AG04450 (cell line): ENCODE measurements at regions of chr1 and their contacts with region 1.

Region 1: DNA sequence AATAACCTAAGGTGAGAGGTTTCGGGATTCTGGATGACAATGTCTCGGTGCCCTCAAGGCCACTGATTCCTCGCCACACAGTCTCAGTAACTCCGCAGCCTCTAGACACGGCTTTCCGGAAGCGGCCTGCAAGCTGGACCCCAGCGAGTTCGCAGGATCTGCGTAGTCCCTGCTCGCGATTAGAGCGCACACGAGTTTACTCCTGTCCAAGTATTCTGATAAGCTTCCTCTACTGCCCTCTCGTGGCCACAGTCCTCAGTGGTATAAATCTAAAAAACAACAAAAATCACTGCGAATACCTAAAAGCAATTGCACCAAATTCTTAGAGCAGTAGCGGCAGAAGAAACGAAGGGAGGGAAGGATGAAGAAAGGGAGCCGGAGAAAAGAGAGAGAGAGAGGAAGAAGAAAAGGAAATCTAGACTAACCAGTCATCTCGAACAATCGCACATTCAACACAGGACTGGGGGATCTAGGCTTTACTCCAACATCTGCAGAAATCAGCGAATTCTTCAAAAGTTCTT is 1.1 kb upstream of the PLXNA2 start:
- DNase-seq: peak; percentile 78
- H3K4me3 ChIP-seq: 0 out of 2 replicates have a peak overlapping the region, but pooled peaks have one; percentile 20
- H3K27ac ChIP-seq: peak overlapping the region; percentile 21
- H3K27me3 ChIP-seq: peaks cover 30% of the 10 kb centered on the region
- CTCF ChIP-seq: peak; percentile 77

Region 2: GRCh38 chr1:207997486-207998268 is 247.6 kb before region 1 on chr1:
- CTCF ChIA-PET with region 1: interaction called, 18 read pairs
- POLR2A ChIA-PET with region 1: no interaction called
- DNase-seq: peak; percentile 27
- H3K4me3 ChIP-seq: no peak overlapping the region
- H3K27ac ChIP-seq: no peak overlapping the region
- H3K27me3 ChIP-seq: peaks cover 10% of the 10 kb centered on the region
- CTCF ChIP-seq: peak; percentile 83

Region 3: GRCh38 chr1:208029381-208030287 is 215.6 kb before region 1 on chr1:
- CTCF ChIA-PET with region 1: interaction called, 593 read pairs
- POLR2A ChIA-PET with region 1: no interaction called
- DNase-seq: peak; percentile 33
- H3K4me3 ChIP-seq: no peak overlapping the region; the same call in 1 of the 2 replicates
- H3K27ac ChIP-seq: peak overlapping the region; percentile 73
- H3K27me3 ChIP-seq: no peaks in the 10 kb centered on the region
- CTCF ChIP-seq: no peak

Region 4: DNA sequence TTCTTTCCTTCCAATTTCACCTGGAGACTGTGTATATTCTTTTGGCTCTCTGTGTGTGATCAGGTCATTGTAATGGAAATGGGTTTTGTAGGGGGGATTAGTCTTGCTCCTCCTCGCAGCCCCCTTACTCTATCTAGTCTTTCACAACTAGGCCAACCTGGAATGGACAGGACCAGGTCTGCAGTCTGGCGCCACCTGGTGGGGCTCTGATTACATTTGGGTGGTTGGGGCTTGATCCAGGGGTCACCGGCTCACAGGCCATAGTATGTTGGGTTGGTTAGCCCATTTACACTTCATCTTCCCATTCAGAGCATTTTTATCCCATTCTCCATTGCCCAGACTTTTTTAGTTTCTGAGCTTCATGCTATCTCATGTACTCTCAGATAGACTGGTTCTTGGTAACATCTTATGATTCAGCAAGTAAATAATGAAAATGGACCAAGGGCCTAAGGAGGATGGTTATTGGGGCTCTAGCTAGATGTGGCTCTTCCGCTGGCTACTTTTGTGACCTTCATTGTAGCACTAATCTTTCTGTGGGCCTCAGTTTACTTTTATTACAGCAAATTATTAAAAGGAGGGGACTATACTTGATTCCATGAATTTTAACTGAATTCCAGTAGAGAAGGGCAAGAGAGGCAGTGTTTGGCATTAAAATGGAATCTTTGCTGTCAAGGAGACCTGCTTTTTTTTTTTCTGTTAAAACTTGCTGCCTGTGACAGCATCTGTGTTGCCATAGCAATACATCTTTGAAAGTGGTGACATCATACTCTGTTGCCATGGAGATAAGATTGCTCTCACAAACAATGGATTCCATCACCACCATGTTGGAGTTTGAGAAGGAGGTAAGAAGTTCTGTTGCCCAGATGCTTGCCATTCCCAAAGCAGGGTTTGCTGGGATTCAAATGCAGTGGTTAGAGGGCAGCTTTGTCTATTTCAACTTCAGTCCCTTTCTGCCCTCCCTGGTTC is 151.2 kb before region 1 on chr1:
- CTCF ChIA-PET with region 1: interaction called, 11 read pairs
- POLR2A ChIA-PET with region 1: no interaction called
- DNase-seq: no peak
- H3K4me3 ChIP-seq: no peak overlapping the region
- H3K27ac ChIP-seq: no peak overlapping the region
- H3K27me3 ChIP-seq: no peaks in the 10 kb centered on the region
- CTCF ChIP-seq: peak; percentile 77

Region 5: DNA sequence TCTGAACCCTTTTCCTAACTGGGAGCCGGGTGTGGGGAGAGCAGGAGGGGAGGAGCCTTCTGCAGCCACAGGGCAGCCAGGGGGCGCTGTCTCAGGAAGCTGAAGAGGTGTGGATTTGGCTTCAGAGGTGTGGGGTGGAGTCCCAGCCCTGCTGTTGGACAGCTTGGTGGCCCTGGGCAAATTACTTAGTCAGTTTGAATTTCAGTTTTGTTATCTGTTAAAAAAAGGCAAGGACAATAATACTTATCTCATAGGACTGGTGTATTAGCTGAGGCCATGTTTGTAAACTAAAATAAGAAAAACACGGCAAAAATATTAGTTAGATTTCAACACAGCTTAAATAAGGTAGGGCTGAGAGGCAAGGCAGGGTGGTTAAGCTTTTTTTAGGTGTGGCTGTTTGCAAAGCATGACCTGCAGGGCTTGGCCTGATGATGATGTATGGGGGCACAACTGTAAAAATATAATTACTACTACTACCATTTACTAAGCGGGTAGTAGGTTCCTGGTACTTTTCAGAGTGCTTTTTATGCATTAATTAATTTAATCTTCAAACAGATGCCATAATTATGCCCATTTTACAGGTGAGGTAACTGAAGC is 112.9 kb before region 1 on chr1:
- CTCF ChIA-PET with region 1: interaction called, 32 read pairs
- POLR2A ChIA-PET with region 1: no interaction called
- DNase-seq: no peak
- H3K4me3 ChIP-seq: no peak overlapping the region
- H3K27ac ChIP-seq: no peak overlapping the region
- H3K27me3 ChIP-seq: peaks cover 2% of the 10 kb centered on the region
- CTCF ChIP-seq: peak; percentile 73

Region 6: GRCh38 chr1:208233546-208233945 is 11.7 kb before region 1 on chr1:
- CTCF ChIA-PET with region 1: interaction called, 23 read pairs
- POLR2A ChIA-PET with region 1: no interaction called
- DNase-seq: no peak
- H3K4me3 ChIP-seq: no peak overlapping the region
- H3K27ac ChIP-seq: no peak overlapping the region
- H3K27me3 ChIP-seq: peaks cover 2% of the 10 kb centered on the region
- CTCF ChIP-seq: no peak